Prostate gland (tissue), 2 donors: ENCODE measurements at regions of chr1 and their contacts with region 1.

Region 1: GRCh38 chr1:56590520-56591011 is 11.2 kb upstream of the PLPP3 start:
- DNase-seq: no peak
- H3K4me3 ChIP-seq: no peak overlapping the region
- H3K27ac ChIP-seq: no peak overlapping the region
- H3K4me1 ChIP-seq: no peaks in the 10 kb centered on the region
- H3K27me3 ChIP-seq: no peaks in the 10 kb centered on the region
- CTCF ChIP-seq: no peak
- POLR2A ChIP-seq: no peak

Region 2: DNA sequence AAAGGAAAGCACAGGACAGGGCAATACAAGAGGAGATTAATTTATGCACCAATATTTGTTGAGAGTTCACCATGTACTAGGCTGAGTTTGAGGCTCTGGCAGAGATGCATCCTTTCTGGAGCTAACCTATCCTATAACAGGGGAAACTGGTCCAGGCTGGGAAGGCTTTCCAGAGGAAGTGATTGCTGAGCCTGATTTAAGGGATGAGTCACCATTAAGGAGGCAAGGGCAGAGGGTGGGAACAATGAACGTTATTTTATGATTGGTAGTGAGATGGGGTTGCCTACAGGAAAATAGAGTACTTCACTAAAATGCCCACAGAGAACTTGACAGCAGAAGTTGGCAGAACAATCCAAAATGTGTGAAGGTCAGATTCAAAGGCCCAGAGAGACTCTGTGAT is 152.6 kb before region 1 on chr1:
- intact Hi-C with region 1: no loop called
- DNase-seq: no peak
- H3K4me3 ChIP-seq: no peak overlapping the region
- H3K27ac ChIP-seq: no peak overlapping the region
- H3K4me1 ChIP-seq: no peaks in the 10 kb centered on the region
- H3K27me3 ChIP-seq: no peaks in the 10 kb centered on the region
- CTCF ChIP-seq: no peak
- POLR2A ChIP-seq: no peak

Region 3: GRCh38 chr1:56821140-56821797 is 230.7 kb after region 1 on chr1:
- intact Hi-C with region 1: loop called (anchors 5 kb)
- DNase-seq: peak; percentile 77
- H3K4me3 ChIP-seq: no peak overlapping the region
- H3K27ac ChIP-seq: no peak overlapping the region
- H3K4me1 ChIP-seq: peaks cover 14% of the 10 kb centered on the region
- H3K27me3 ChIP-seq: no peaks in the 10 kb centered on the region
- CTCF ChIP-seq: peak; percentile 72 to 93 (median 88)
- POLR2A ChIP-seq: no peak